A549 (cell line): ENCODE measurements at regions of chr10 and their contacts with region 1.

Region 1: GRCh38 chr10:11986593-11987216 is 55.9 kb downstream of the UPF2 start:
- DNase-seq: peak; percentile 57 to 89
- ATAC-seq: peak; percentile 92
- H3K4me3 ChIP-seq: 0 out of 3 replicates have a peak overlapping the region, but pooled peaks have one; percentile 7
- H3K27ac ChIP-seq: peak overlapping the region; percentile 1 to 32; a peak in 4 of 6 replicates
- H3K4me1 ChIP-seq: peaks cover 10% of the 10 kb centered on the region; the same call in 2 of the 3 replicates
- CTCF ChIP-seq: peak; percentile 98
- EP300 ChIP-seq: no peak
- POLR2A ChIP-seq: no peak
- RAD21 ChIP-seq: peak; percentile 96 to 97

Region 2: DNA sequence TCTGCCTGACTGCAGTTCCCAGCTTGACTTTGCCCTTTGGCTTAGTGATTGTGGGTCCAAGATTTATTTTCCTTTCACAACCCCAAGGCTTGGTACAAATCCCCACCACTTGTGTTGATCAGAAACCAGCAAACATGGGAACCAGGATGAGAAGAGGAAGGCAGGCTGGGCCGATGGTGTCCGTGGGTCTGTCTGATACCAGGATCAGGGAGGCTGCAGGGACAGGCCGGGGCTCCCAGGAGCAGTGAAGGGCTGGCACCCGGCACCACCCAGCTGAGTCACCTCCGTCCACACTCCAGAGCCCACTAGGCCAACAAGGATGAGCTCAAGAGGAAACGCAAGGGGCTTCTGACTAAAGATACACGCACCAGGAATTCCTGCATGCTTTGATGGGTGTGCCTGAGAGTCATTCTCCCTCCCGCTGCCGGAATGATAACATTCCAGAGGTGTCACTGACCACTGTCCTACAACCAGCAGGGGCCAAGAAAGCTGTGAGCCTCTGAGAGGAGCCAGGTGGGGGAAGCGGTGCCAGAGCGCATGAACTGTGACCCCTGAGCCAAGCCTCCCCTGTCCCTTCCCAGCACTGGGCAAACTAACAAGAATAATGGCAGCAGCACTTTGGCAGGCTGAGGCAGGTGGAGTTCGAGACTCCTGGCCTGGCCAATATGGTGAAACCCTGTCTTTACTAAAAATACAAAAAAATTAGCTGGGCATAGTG is 192.8 kb before region 1 on chr10:
- CTCF ChIA-PET with region 1: interaction called, 61 read pairs
- POLR2A ChIA-PET with region 1: no interaction called
- DNase-seq: peak; percentile 94 to 95
- ATAC-seq: peak; percentile 96
- H3K4me3 ChIP-seq: 0 out of 3 replicates have a peak overlapping the region, but pooled peaks have one; percentile 9
- H3K27ac ChIP-seq: peak overlapping the region; percentile 80 to 86
- H3K4me1 ChIP-seq: peaks cover 30% of the 10 kb centered on the region
- CTCF ChIP-seq: no peak
- EP300 ChIP-seq: peak in 1 of 2 experiments; percentile 53; a peak in 1 of 5 replicates
- POLR2A ChIP-seq: no peak
- RAD21 ChIP-seq: no peak

Region 3: DNA sequence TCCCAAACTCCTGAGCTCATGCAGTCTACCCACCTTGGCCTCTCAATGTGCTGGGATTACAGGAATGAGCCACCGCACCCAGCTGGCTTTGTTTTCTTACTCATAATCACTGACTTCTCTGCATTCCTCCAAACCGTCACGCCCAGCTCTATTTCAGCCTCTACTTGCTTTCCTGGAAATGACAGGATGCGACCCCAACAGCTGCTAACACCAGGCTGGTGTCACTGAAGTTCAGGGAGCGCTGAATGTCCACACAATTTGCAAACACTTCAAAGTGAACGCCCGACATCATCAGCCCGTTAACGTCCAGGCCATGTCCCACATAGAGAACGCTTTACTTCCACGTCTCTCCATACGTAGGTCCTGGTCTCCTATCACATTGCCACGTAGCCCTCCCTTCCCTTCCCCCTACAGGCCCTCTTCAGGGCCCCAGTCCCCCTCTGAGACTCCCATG is 176.4 kb before region 1 on chr10:
- CTCF ChIA-PET with region 1: interaction called, 11 read pairs
- POLR2A ChIA-PET with region 1: no interaction called
- DNase-seq: peak in 1 of 2 experiments; percentile 56
- ATAC-seq: peak; percentile 35 to 77; a peak in 3 of 6 replicates
- H3K4me3 ChIP-seq: no peak overlapping the region
- H3K27ac ChIP-seq: peak overlapping the region in 1 of 2 experiments; percentile 44; a peak in 1 of 6 replicates
- H3K4me1 ChIP-seq: peaks cover 12% of the 10 kb centered on the region
- CTCF ChIP-seq: no peak
- EP300 ChIP-seq: no peak
- POLR2A ChIP-seq: no peak
- RAD21 ChIP-seq: no peak

Region 4: DNA sequence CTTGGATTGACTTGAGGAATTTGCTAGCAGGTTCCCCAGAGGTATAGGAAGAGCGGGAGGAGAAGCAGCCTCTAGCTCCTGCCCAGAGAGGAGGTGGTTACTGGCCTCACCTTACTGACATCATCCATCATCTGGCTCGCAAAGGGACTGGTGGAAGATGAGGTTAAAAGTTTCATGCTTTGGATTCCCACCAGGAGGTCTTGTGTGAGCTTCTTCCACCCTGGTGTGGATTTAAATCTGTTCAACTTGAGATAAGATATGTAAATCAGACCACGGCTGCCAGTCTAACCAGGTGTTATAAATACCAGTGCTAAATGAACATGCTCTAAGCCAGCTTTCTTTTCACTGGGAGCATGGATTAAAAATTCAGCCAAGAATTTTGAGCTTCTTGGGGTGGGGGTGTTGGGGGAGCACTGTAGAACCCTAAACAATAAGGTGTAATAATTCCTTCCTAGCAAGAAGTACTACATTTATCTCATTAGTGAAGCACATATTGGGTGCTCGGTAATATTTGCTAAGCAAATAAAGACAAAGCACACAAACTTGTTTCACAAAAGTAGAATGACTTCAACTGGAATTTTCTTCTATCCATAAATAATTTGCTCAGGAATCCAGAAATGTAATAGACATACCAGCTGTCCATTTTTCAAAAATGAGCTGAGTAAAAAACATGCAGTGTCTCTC is 155.7 kb before region 1 on chr10:
- CTCF ChIA-PET with region 1: interaction called, 11 read pairs
- POLR2A ChIA-PET with region 1: no interaction called
- DNase-seq: no peak
- ATAC-seq: peak; percentile 57 to 60; a peak in 4 of 6 replicates
- H3K4me3 ChIP-seq: peak overlapping the region; percentile 2; the same call in 1 of the 3 replicates
- H3K27ac ChIP-seq: peak overlapping the region; percentile 69 to 87
- H3K4me1 ChIP-seq: peaks cover 29% of the 10 kb centered on the region
- CTCF ChIP-seq: no peak
- EP300 ChIP-seq: no peak
- POLR2A ChIP-seq: no peak
- RAD21 ChIP-seq: no peak

Region 5: DNA sequence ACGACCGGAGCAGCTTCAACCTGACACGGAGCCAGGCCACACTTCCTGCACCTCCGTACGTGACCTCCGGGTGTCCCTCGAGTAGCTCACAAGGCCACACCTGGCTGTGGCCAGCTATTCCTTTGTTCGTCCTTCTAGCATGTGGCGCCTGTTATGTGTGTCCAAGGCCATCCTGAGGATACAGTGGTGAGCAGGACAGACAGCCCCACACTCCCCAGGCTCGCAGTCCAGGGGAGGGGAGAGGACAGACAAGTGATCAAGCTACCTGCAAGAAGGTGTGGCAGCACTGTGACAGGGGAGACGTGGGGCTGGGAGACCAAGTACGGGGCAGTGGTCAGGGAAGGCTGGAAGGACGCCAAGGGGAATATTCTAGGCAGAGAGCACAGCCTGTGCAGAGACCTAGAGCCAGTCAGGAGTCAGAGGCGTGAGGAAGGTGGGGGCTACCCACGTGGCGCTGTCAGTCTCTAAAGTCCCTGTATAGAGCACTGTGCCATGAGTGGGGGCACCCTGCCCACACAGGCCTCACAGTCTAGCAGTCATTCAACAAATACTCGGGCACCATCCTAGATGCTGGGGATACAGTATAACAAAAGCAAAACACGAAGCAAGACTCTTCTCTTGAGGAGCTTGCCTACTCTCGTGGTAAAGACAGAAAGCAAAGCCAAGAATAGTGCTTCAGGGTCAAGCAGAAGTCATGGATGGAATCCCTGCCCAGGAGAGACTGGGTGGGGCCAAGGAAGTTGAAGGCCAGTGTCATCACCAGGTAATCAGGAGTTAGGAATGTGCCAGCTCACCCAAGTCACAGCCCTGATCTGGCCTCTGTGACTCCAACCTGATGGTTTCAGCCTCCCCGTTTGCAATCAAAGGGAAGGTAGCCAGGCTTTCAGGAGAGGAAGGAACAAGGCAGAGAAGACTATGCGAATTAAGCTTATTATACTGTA is 105.0 kb before region 1 on chr10:
- CTCF ChIA-PET with region 1: interaction called, 12 read pairs
- POLR2A ChIA-PET with region 1: no interaction called
- DNase-seq: peak; percentile 62 to 86
- ATAC-seq: peak; percentile 67 to 70
- H3K4me3 ChIP-seq: no peak overlapping the region
- H3K27ac ChIP-seq: peak overlapping the region; percentile 48 to 92
- H3K4me1 ChIP-seq: peaks cover 33% of the 10 kb centered on the region
- CTCF ChIP-seq: no peak
- EP300 ChIP-seq: no peak
- POLR2A ChIP-seq: no peak
- RAD21 ChIP-seq: peak in 1 of 2 experiments; percentile 14; a peak in 1 of 5 replicates

Region 6: GRCh38 chr10:11958956-11959355 is 27.7 kb before region 1 on chr10:
- CTCF ChIA-PET with region 1: interaction called, 21 read pairs
- POLR2A ChIA-PET with region 1: no interaction called
- DNase-seq: peak in 1 of 2 experiments; percentile 23
- ATAC-seq: peak; percentile 59 to 71; a peak in 4 of 6 replicates
- H3K4me3 ChIP-seq: no peak overlapping the region
- H3K27ac ChIP-seq: peak overlapping the region; percentile 58 to 74; a peak in 5 of 6 replicates
- H3K4me1 ChIP-seq: peaks cover 19% of the 10 kb centered on the region
- CTCF ChIP-seq: no peak
- EP300 ChIP-seq: no peak
- POLR2A ChIP-seq: no peak
- RAD21 ChIP-seq: no peak

Region 7: GRCh38 chr10:12006671-12007070 is 20.0 kb after region 1 on chr10:
- CTCF ChIA-PET with region 1: interaction called, 13 read pairs
- POLR2A ChIA-PET with region 1: no interaction called
- DNase-seq: no peak
- ATAC-seq: no peak
- H3K4me3 ChIP-seq: no peak overlapping the region
- H3K27ac ChIP-seq: no peak overlapping the region
- H3K4me1 ChIP-seq: no peaks in the 10 kb centered on the region
- CTCF ChIP-seq: no peak
- EP300 ChIP-seq: no peak
- POLR2A ChIP-seq: no peak
- RAD21 ChIP-seq: no peak

Region 8: DNA sequence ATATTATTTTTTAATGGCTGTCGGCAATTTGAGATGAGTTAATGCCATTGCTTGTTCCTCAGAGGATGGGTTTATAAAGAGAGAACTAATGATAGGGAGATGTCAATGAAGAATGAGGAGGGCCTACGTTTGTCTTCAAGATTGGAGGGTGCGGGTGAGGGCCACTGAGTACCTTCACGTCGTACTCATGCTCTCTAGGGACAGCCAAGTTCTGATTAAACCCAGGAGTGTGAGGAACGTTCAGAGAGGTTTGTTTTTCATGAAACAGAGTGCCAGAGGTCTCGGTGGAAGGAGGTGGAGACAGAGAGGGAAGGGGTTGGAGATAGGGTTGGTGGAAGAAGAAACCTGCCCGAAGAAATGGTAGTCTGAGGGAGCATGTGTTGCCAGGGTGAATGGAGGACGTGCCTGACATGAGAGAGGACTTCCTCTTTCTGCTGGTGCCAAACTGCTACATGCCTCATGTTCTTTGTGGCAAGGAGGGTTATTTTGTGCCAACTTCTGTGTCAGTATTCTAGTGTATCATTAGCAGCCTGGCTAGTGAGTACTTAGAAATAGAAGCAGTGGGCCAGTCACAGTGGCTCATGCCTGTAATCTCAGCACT is 91.0 kb after region 1 on chr10:
- CTCF ChIA-PET with region 1: no interaction called
- POLR2A ChIA-PET with region 1: no interaction called
- DNase-seq: no peak
- ATAC-seq: no peak
- H3K4me3 ChIP-seq: no peak overlapping the region
- H3K27ac ChIP-seq: no peak overlapping the region
- H3K4me1 ChIP-seq: peaks cover 12% of the 10 kb centered on the region; the same call in 2 of the 3 replicates
- CTCF ChIP-seq: no peak
- EP300 ChIP-seq: no peak
- POLR2A ChIP-seq: no peak
- RAD21 ChIP-seq: no peak

Region 9: GRCh38 chr10:12703813-12704212 is 717.1 kb after region 1 on chr10:
- CTCF ChIA-PET with region 1: no interaction called
- POLR2A ChIA-PET with region 1: no interaction called
- DNase-seq: peak in 1 of 2 experiments; percentile 57
- ATAC-seq: 0 out of 6 replicates have a peak, but pooled peaks of 1 of the 2 experiments have one; percentile 17
- H3K4me3 ChIP-seq: no peak overlapping the region
- H3K27ac ChIP-seq: peak overlapping the region; percentile 82 to 94
- H3K4me1 ChIP-seq: peaks cover 75% of the 10 kb centered on the region
- CTCF ChIP-seq: no peak
- EP300 ChIP-seq: peak; percentile 23 to 61; a peak in 2 of 5 replicates
- POLR2A ChIP-seq: no peak
- RAD21 ChIP-seq: peak in 1 of 2 experiments; percentile 19; a peak in 1 of 5 replicates